Sigmoid colon (tissue), 7 donors: ENCODE measurements at regions of chr3 and their contacts with region 1.

Region 1: DNA sequence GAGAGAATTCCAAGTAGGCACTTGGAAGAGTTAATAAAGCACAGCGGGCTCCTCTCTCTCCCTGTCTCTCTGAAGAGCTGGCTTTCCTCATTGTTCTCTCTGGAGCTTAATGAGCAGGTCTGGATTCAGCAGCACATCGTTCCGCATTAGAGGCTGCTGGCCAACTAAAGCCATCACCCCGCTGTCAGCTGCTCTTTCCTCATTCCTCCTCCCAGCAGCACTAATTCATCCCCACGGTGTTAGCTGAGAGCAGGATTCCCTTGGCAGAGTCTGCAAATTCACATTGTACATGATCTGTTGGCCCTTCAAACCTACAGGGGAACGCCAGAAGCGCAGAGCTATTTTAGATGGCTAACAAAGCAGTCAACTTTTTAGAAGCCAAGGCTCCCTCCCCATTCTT is 44.2 kb downstream of the SGO1 start:
- DNase-seq: peak; percentile 89
- H3K4me3 ChIP-seq: no peak overlapping the region
- H3K27ac ChIP-seq: peak overlapping the region; percentile 43 to 80 (median 61)
- H3K4me1 ChIP-seq: peaks cover 0 to 32% (median 29%) of the 10 kb centered on the region in 4 donors
- H3K27me3 ChIP-seq: no peaks in the 10 kb centered on the region
- CTCF ChIP-seq: peak in 2 of 4 experiments; percentile 25 to 33
- EP300 ChIP-seq: peak in 1 of 4 donors; percentile 73
- POLR2A ChIP-seq: no peak

Region 2: DNA sequence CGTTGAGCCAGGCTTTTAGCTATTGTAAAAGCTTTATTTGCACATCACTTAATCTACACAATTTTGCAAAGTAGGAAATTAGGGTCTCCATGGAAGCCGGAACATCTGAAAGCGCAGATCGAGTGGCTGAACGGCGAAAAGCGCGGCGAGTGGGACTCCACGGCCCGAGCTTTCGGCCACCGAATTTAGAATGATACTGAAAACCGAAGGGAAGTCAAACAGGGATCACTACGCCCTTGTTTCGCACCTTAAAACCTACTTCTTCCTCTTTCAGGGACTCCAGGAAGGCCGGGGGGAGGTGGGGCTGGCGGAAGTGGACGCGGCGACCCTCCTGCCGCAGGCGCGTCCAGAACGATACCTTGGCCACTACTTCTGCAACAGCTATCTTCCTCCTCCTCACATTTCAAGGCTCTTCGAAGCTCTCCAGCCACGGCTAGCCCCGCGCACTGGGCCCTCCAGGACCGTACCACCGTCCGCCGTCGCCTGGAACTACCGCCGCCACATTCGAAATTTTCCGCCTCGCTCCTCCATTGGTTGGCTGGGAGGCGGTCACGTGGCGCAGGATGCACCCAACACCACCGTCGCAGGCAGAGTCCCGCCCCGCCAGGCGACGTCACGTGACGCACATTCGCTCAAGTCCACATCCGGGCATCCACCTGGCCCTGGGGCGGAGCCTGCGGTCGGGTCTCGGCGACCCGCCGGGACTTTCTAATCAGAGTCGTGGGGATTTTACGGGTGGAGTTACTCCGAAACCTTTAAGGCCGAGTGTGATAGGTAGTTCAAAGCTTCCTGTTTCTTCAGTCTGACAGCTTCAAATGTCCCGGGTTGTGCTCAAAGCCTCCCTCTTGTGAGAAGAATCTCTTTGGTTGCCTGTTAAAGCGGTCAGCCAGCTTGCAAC is 44.1 kb after region 1 on chr3 and contains the start of gene SGO1:
- intact Hi-C with region 1: loop called (anchors 1 kb)
- DNase-seq: peak; percentile 99
- H3K4me3 ChIP-seq: peak within 1 kb of the TSS; percentile 53 to 69 (median 63)
- H3K27ac ChIP-seq: peak within 1 kb of the TSS; percentile 86 to 91 (median 87)
- H3K4me1 ChIP-seq: peaks cover 0 to 18% (median 11%) of the 10 kb centered on the region in 4 donors
- H3K27me3 ChIP-seq: no peaks in the 10 kb centered on the region
- CTCF ChIP-seq: no peak
- EP300 ChIP-seq: peak in 1 of 4 donors; percentile 42
- POLR2A ChIP-seq: peak; percentile 79 to 89
- total RNA-seq, gene SGO1: 0.16 to 1.4 TPM in 2 of 4 donors, not detected in the others

Region 3: DNA sequence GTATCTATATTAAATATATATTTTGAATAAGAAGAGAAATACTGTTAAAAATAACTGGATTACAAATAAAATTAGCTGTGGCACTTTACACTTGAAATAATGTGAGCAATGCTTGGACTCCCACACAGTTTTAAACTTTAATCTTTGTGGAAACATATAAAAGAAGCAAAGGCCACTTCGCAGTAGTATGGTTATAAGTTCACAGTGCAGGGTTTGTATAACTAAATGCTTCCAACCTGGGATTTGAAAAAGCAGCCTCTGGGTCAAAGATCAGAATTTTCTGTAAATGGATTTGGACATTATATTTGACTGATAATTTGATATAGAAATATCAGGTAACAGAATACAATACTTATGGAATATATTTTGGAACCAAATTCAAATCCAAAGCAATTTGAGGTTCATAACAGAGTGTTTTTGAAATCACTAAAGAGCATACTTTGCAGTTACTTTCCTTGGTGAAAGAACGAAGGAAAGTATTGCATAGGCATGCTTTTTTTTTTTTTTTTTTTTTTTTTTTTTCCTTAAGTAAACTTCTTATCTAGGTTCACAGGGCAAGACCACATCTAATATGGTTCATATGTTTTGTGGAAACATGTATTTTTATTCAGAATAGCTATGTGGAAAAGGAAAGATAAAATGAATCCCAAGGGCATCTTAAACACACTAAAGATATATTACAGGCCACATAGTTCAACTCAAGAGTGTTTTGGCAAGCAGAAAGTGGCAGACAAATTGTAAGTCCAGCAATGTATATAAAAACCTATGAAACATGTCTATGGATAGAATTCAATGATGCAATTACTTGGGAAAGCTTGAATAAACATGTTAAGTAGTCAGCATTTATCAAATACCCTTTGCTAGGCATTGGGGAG is 91.3 kb after region 1 on chr3:
- intact Hi-C with region 1: no loop called
- DNase-seq: no peak
- H3K4me3 ChIP-seq: no peak overlapping the region
- H3K27ac ChIP-seq: no peak overlapping the region
- H3K4me1 ChIP-seq: no peaks in the 10 kb centered on the region
- H3K27me3 ChIP-seq: no peaks in the 10 kb centered on the region
- CTCF ChIP-seq: no peak
- EP300 ChIP-seq: no peak
- POLR2A ChIP-seq: no peak